Activated T-helper 2 cell treated with anti-CD3 and anti-CD28 coated beads, Interferon-gamma antibody, Interleukin-2, Interleukin-4, amounts not matched to agents 10 μg/mL and 5 μg/mL and 100 μg/mL, durations not matched to agents 14 hours and 24 hours and 36 hours (primary cell): ENCODE measurements at regions of chr17 and their contacts with region 1.

Region 1: DNA sequence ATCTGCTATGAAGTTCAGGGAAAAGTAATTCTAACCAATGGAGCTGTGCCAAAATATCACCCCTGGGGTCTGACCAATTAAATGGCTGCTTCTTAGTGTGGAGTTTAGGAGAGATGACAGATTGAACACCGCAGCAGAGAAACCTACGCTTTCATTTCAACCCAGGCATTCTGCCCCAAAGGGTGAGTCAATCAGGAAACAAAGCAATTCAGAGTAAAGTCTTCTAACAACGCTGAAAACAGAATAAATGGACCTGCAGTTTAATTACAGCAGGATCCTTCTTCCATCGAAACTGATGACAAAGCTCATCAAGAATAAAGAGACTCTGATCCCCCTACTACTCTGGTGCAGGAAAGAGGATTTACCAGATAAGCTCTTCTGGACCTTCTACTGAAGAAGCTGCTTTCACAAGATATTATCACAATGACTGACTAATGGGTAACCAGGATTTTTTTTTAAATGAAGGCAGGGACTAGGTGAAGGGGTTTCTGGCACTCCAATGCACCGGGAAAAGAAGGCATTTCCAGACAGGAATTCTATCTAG is 16.7 kb downstream of the RFFL start:
- DNase-seq: peak; percentile 59
- H3K4me3 Mint-ChIP-seq: peak overlapping the region; percentile 77
- H3K27ac Mint-ChIP-seq: peak overlapping the region; percentile 95
- H3K4me1 Mint-ChIP-seq: peaks cover 49% of the 10 kb centered on the region
- H3K27me3 Mint-ChIP-seq: no peaks in the 10 kb centered on the region

Region 2: DNA sequence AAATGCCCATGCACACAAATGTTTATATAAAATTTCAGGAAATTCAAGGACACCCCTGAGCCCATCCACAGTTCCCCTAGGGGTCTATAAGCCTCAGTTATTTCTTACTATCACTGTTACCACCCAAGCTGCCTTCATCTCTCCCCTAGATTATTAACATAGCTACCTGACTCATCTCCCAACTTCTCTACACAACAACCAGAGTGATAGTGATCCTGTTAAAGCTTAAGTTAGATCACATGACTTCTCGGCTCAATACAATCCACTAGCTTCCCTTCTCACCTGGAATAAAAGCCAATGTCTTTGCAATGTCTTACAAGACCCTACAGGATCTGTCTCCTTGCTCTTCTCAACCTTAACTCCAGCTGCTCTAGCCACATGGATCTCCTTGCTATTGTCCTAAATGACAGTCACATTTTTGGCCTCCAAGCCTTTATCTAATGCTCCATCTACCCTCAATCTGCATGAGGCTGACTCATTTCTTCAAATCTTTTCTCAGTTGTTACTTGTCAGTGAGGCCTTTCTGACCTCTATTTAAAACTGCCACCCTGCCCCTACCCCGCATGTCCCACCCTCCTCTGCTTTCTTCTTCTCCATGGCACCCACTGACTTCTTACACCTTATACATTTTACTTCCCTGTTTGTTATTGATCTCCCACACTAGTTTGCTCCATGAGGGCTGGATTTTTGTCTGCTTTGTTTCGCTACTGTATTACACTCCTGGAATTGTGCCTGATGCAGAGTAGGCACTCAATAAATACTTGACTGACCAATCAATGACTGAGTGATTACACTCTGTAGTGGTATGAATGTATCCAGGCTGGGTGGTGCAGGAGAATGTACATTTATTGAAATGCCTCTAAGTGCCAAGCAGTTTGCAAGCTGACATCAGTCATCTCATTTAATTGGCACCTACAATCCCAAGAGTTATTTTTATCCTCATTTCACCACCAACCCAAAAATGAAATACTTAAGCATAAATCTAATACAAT is 71.7 kb before region 1 on chr17:
- intact Hi-C with region 1: loop called (anchors 2 kb)
- DNase-seq: peak; percentile 28
- H3K4me3 Mint-ChIP-seq: peak overlapping the region; percentile 20
- H3K27ac Mint-ChIP-seq: peak overlapping the region; percentile 82
- H3K4me1 Mint-ChIP-seq: peaks cover 39% of the 10 kb centered on the region
- H3K27me3 Mint-ChIP-seq: no peaks in the 10 kb centered on the region

Region 3: GRCh38 chr17:35022536-35023063 is 24.2 kb before region 1 on chr17:
- intact Hi-C with region 1: loop called (anchors 2 kb)
- DNase-seq: peak; percentile 63
- H3K4me3 Mint-ChIP-seq: peak overlapping the region; percentile 70
- H3K27ac Mint-ChIP-seq: peak overlapping the region; percentile 99
- H3K4me1 Mint-ChIP-seq: peaks cover 30% of the 10 kb centered on the region
- H3K27me3 Mint-ChIP-seq: no peaks in the 10 kb centered on the region

Region 4: DNA sequence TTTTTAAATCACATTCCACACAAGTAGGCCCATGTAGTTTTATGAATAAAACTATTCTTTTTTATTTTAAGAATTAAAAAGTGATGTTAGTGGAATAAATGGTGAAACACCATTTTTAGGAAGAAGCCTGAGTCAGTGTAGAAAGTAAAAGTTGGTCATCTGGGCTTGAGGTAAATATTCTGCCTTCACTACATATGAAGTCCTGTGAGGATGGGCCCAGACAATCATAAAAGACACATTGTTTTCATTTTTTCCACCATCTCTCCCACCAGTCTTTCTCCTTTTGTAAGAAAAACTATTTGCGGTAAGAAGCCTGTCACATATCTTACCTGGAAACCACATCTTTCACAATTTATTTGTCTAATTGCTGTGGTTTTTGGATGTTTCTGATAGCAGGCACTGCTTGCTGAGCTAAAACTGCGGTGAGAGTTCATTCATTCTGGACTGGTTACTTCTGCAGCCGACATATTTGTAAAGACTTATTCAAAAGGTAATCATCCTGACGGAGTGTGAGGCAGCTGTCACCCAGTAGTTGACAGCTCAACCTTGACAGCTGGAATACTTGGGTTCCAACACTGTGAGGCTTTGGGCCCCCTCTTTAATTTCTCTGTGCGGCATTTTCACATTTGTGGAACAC is 27.3 kb after region 1 on chr17:
- intact Hi-C with region 1: loop called (anchors 1 kb)
- DNase-seq: no peak
- H3K4me3 Mint-ChIP-seq: peak overlapping the region; percentile 35
- H3K27ac Mint-ChIP-seq: peak overlapping the region; percentile 78
- H3K4me1 Mint-ChIP-seq: peaks cover 53% of the 10 kb centered on the region
- H3K27me3 Mint-ChIP-seq: no peaks in the 10 kb centered on the region

Region 5: GRCh38 chr17:35103271-35103670 is 56.5 kb after region 1 on chr17:
- intact Hi-C with region 1: no loop called
- DNase-seq: no peak
- H3K4me3 Mint-ChIP-seq: no peak overlapping the region
- H3K27ac Mint-ChIP-seq: no peak overlapping the region
- H3K4me1 Mint-ChIP-seq: no peaks in the 10 kb centered on the region
- H3K27me3 Mint-ChIP-seq: no peaks in the 10 kb centered on the region